Transverse colon (tissue), 4 donors: ENCODE measurements at regions of chr13 and their contacts with region 1.

Region 1: GRCh38 chr13:57123681-57124080 is 17.0 kb upstream of the PRR20A start:
- DNase-seq: no peak
- H3K4me3 ChIP-seq: no peak overlapping the region
- H3K27ac ChIP-seq: no peak overlapping the region
- H3K4me1 ChIP-seq: no peaks in the 10 kb centered on the region
- H3K27me3 ChIP-seq: no peaks in the 10 kb centered on the region
- CTCF ChIP-seq: no peak
- EP300 ChIP-seq: no peak
- POLR2A ChIP-seq: no peak

Region 2: DNA sequence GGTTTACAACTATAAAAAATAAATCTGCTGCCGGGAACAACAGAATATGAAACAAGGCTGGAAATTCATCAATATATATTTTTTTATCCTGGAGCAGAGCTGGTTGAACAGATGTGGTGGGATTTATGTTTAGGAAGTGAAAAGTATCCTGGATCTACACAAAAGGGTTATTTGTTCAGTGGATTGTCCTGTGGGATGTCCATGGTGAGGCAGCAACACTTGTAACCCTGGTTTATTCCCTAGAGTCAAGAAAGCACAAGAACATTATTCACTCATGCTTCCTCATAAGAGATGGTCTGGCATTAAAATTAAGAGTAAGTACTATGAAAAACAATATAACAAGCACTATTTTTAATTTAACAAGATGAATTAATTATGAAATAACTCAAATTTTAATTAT is 89.3 kb after region 1 on chr13:
- in situ Hi-C with region 1: loop called in 2 of 4 experiments (anchors 25 kb)
- intact Hi-C with region 1: no loop called
- DNase-seq: no peak
- H3K4me3 ChIP-seq: no peak overlapping the region
- H3K27ac ChIP-seq: no peak overlapping the region
- H3K4me1 ChIP-seq: no peaks in the 10 kb centered on the region
- H3K27me3 ChIP-seq: no peaks in the 10 kb centered on the region
- CTCF ChIP-seq: no peak
- EP300 ChIP-seq: no peak
- POLR2A ChIP-seq: no peak